ENCODE measurements at regions of chr14 and their contacts with region 1.

Region 1: GRCh38 chr14:100303177-100303576 is 3.1 kb downstream of the SLC25A29 start:
- DNase-seq: peak; percentile 38
- H3K4me3 Mint-ChIP-seq: no peak overlapping the region
- H3K27ac Mint-ChIP-seq: no peak overlapping the region
- H3K4me1 Mint-ChIP-seq: peaks cover 19% of the 10 kb centered on the region
- H3K27me3 Mint-ChIP-seq: peaks cover 68% of the 10 kb centered on the region

Region 2: DNA sequence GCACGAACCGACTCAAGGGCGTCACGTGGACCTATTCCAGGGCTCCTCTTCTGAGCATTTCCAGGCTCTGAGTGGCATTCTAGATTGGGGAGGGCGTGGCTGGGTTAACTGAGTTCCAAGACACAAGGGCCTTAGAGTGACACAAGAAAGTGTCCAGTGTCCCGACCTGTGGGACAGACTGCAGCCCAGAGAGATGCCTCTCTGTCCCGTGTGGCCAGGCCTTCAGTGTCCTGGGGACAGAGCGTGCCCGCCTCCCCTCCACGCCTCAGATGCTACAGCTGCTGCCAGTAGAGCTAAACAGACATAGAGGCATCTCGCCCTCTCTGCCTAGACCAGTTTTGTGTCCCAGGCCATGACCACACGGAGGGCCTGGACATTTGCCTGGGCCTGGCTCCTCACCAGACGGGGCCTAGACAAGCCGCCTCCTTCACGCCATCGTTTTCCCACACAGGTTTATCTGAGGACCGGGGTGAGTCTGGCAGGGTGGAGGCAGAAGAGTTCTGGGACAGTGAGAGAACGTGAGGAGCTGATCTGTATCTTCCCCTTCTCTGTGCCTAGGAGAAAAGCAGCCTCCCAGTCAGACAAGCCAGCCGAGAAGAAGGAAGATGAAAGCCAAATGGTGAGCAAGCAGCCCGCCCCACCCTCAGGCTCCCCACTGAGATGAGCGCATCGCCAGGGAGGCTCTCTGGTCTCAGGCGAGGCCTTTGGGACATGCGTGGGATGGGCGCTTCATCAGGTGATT is 170.8 kb before region 1 on chr14:
- CTCF ChIA-PET with region 1: no interaction called
- DNase-seq: no peak
- H3K4me3 Mint-ChIP-seq: no peak overlapping the region
- H3K27ac Mint-ChIP-seq: no peak overlapping the region
- H3K4me1 Mint-ChIP-seq: peaks cover 2% of the 10 kb centered on the region
- H3K27me3 Mint-ChIP-seq: no peaks in the 10 kb centered on the region

Region 3: GRCh38 chr14:100375963-100376735 is 73.0 kb after region 1 on chr14:
- CTCF ChIA-PET with region 1: interaction called, 13 read pairs
- DNase-seq: peak; percentile 94
- H3K4me3 Mint-ChIP-seq: peak within 1 kb of the TSS; percentile 96
- H3K27ac Mint-ChIP-seq: peak within 1 kb of the TSS; percentile 99
- H3K4me1 Mint-ChIP-seq: peaks cover 53% of the 10 kb centered on the region
- H3K27me3 Mint-ChIP-seq: no peaks in the 10 kb centered on the region

Region 4: DNA sequence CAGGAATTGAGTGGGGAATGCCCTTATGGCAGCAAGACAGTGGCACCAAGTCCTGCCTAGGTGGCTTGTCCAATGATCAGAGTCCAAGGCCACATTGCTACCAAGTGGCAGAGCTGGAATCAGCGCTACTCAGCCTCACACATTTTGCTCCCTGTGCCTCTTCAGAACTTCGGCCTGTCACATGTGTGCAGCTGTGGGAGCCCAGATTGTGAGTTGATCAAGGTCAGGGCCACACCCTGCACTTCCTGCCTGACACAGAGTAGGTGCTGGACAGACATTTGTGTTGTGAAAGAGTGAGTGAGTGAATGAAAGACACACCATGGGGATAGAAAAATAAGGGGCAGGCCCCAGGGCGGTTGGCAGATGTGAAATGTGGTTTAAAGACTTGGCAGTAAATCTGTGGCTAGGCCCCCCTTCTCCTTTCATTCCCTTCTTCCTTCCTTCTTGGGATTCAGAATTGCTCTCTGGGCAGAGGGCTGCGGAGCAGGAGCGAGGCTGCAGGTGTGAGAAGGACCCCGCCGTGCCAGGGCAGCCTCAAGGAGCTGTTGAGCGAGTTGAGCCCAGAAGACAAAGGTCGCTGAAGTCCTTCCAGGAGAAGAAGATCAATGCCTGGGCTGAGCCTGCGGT is 103.4 kb after region 1 on chr14:
- CTCF ChIA-PET with region 1: no interaction called
- DNase-seq: peak; percentile 66
- H3K4me3 Mint-ChIP-seq: no peak overlapping the region
- H3K27ac Mint-ChIP-seq: peak overlapping the region; percentile 82
- H3K4me1 Mint-ChIP-seq: peaks cover 25% of the 10 kb centered on the region
- H3K27me3 Mint-ChIP-seq: no peaks in the 10 kb centered on the region

Measured in activated naive CD4-positive, alpha-beta T cell treated with anti-CD3 and anti-CD28 coated beads, Interleukin-2, amount 10 ng/mL, durations not matched to agents 7 days and 5 days (primary cell).